A673 (cell line): ENCODE measurements at regions of chr6 and their contacts with region 1.

Region 1: DNA sequence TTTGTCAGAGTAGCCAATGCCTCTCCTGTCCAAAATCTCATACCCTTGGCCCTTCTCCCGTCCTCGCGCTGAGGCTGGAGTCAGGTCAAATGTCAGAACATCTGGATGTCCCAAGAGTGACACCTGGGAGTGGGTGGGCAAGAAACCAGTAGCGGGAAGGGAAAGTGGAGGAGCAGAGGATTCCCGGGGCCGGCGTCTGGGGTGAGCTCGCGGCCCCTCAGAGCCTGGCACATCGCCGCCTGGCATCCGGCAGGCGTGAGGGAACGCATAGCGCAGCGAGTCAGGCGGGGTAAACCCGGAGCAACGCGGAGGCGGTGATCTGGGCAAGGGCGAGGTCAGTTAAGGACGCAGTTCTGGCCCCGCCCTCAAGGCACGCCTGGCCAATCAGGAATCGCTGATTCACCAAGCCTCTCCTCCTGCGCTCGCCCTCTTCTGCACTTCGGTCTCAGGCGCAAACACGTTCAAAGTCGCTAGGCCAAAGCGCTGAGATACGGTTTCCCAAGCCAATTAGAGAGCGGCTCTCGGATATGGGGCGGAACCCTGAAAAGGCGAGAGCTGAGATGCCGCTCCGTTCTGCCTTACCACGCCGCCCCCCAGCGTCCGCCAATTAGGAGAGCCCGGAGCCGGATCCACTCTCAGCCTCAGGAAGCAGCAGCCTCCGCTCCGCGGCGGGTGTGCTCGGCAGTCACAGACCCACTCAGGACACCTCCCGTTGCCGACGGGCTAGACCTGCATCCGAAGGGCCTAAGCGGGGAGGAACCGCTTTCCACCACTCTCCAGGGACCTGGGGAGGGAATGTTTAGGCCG is 22.5 kb downstream of the VPS52 start:
- DNase-seq: peak; percentile 99
- H3K4me3 ChIP-seq: peak overlapping the region; percentile 59
- H3K27ac ChIP-seq: peak overlapping the region; percentile 94
- H3K4me1 ChIP-seq: peaks cover 16% of the 10 kb centered on the region
- H3K27me3 ChIP-seq: no peaks in the 10 kb centered on the region
- CTCF ChIP-seq: no peak

Region 2: DNA sequence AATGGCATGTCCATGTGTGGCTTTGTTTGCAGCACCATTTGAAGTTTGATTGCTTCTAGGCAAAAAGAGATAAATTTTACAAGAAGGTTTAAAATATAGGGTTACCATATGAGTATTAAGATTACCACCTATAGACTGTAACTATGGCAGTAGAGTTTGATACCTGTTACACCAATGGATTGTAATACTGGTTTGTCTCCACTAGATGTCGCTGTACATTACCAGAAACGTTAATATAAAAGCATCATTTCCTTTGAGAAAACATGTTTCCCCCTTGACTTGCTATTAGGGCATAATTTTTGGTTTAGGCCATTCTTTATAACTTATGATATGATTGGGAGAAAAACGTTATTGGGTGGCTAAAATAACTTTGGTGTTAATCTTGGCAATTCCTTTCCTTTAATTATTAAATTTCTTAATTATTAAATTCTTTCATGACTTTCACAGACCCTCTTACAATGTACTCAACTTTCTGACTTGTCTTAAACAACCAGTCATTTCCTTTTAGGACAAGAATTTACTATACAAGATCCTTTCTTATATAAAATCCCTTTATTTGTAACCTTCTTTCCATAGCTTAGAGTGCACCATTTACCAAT is 130.5 kb before region 1 on chr6:
- CTCF ChIA-PET with region 1: no interaction called
- POLR2A ChIA-PET with region 1: no interaction called
- intact Hi-C with region 1: loop called (anchors 2 kb)
- DNase-seq: peak; percentile 71
- H3K4me3 ChIP-seq: no peak overlapping the region
- H3K27ac ChIP-seq: no peak overlapping the region
- H3K4me1 ChIP-seq: peaks cover 5% of the 10 kb centered on the region
- H3K27me3 ChIP-seq: peaks cover 39% of the 10 kb centered on the region
- CTCF ChIP-seq: peak; percentile 82

Region 3: DNA sequence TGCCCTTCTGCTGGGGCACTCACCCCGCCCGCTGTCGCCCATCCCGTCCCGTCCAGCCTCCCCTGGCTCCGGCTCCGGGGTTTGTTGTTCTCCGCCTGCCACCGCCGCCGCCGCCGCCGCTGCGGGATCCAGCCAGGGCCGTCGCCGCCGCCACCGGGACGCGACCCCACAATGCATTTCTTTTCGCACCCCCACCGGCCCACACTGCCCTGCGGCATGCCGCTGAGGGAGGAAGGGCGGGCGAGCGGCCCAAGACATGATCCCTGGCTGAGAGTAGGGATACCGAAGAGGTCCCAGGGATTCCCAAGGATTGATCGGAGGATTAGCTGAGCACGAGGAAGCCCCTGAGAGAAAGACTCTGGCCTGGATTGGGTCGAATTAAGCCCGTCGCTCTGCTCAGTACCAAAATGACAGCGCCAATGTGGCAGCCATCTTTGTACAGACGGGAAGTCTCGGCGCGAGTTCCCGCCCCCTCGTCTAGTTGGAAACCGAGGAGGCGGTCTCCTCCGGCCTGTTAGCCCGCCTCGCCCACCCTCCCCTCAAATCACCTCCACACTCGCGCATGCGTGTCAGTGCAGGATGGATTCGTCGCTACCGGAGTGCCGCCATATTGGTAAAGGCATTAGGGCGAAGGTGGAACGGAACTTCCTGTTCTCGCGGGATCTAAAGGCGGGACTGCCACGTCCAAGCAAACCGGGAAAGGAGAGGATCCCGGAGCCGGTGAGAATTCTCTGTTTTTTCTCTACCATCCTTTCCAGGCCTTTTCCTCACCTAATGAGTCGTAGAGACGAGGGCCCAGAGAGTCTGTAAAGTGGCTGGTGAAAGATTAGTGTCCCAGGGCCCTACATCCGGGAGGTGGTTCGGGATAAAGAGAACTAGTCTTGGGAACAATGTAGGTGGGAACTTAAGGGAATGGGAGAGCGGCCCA is 48.6 kb before region 1 on chr6 and contains the starts of genes RXRB and SLC39A7:
- CTCF ChIA-PET with region 1: interaction called, 3 read pairs
- POLR2A ChIA-PET with region 1: no interaction called
- intact Hi-C with region 1: loop called (anchors 2 kb)
- DNase-seq: peak; percentile 100
- H3K4me3 ChIP-seq: peak within 1 kb of the TSS; percentile 80
- H3K27ac ChIP-seq: peak within 1 kb of the TSS; percentile 95
- H3K4me1 ChIP-seq: peaks cover 25% of the 10 kb centered on the region
- H3K27me3 ChIP-seq: no peaks in the 10 kb centered on the region
- CTCF ChIP-seq: no peak
- total RNA-seq, gene RXRB: 42.7 and 43.6 TPM in 2 replicates
- total RNA-seq, gene SLC39A7: 119 and 124 TPM in 2 replicates

Region 4: DNA sequence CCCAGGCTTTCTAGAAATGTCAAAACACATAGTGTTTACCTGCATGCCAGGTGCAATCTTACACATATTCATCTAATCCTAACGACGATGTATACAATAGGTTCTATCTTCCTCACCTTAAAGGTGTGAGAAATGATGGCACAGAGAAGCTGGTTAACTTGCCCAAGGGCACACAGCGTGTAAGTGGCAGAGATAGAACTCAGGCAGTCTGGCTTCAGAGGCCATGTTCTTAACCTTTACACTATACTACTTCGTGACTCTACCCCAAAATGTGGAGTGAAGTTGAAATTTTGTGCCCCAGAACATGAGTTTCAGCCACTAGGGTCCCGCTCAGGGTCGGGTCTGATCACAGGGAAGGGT is 21.9 kb after region 1 on chr6:
- CTCF ChIA-PET with region 1: no interaction called
- POLR2A ChIA-PET with region 1: interaction called, 13 read pairs
- intact Hi-C with region 1: no loop called
- DNase-seq: no peak
- H3K4me3 ChIP-seq: peak overlapping the region; percentile 68
- H3K27ac ChIP-seq: peak overlapping the region; percentile 99
- H3K4me1 ChIP-seq: peaks cover 31% of the 10 kb centered on the region
- H3K27me3 ChIP-seq: no peaks in the 10 kb centered on the region
- CTCF ChIP-seq: no peak

Region 5: GRCh38 chr6:33323623-33323948 is 74.5 kb after region 1 on chr6:
- CTCF ChIA-PET with region 1: no interaction called
- POLR2A ChIA-PET with region 1: no interaction called
- intact Hi-C with region 1: no loop called
- DNase-seq: no peak
- H3K4me3 ChIP-seq: peak overlapping the region; percentile 78
- H3K27ac ChIP-seq: peak overlapping the region; percentile 83
- H3K4me1 ChIP-seq: peaks cover 28% of the 10 kb centered on the region
- H3K27me3 ChIP-seq: no peaks in the 10 kb centered on the region
- CTCF ChIP-seq: no peak